ENCODE measurements at regions of chrX and their contacts with region 1.

Region 1: GRCh38 chrX:138745196-138745595 is 33.7 kb upstream of the FGF13 start:
- DNase-seq: peak in 1 of 2 donors; percentile 9
- ATAC-seq: peak in 1 of 8 donors; percentile 61
- H3K4me3 ChIP-seq: no peak overlapping the region
- H3K27ac ChIP-seq: no peak overlapping the region
- H3K4me1 ChIP-seq: no peaks in the 10 kb centered on the region
- H3K27me3 ChIP-seq: peaks cover 0 to 58% (median 0%) of the 10 kb centered on the region in 7 donors
- CTCF ChIP-seq: peak; percentile 19 to 87 (median 62)

Region 2: DNA sequence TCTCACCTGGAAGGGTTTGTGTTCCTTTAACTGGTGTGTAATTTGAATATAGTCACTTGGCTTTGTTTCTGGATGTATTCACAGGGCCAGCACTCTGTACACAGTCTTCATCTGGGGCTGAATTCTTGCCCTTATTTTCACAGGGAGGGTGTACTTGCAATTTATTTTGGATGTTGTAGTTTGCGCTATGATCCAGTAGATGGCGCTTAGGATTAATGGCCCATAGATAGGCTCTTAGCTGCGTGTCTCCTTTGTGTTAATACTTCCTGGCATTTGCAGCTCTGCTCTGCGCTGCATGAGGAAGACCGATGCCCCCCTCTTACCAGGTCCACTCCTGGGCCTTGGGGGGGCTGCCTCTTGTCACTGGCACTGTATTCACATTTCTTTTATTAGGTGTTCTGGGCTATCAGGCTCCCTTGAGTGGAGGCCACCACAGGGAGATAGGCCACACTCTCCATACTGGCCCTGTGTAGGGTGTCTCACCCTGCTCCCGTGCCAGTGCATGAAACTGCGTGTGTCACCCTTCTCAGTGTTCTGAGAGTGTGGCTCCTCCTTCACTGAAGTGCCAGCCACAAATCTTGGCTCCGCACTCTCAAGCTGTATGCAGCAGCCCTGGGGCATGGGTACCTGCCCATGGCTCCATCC is 617.0 kb before region 1 on chrX:
- intact Hi-C with region 1: loop called in 7 of 10 experiments (anchors 2 to 10 kb)
- DNase-seq: peak in 1 of 2 donors; percentile 3
- ATAC-seq: peak in 1 of 8 donors; percentile 50
- H3K4me3 ChIP-seq: no peak overlapping the region
- H3K27ac ChIP-seq: no peak overlapping the region
- H3K4me1 ChIP-seq: no peaks in the 10 kb centered on the region
- H3K27me3 ChIP-seq: peaks cover 0 to 38% (median 0%) of the 10 kb centered on the region in 7 donors
- CTCF ChIP-seq: peak; percentile 18 to 70 (median 48)

Region 3: GRCh38 chrX:138191998-138192397 is 553.2 kb before region 1 on chrX:
- intact Hi-C with region 1: loop called in 7 of 10 experiments (anchors 5 to 10 kb)
- DNase-seq: peak in 1 of 2 donors; percentile 4
- ATAC-seq: no peak
- H3K4me3 ChIP-seq: no peak overlapping the region
- H3K27ac ChIP-seq: no peak overlapping the region
- H3K4me1 ChIP-seq: no peaks in the 10 kb centered on the region
- H3K27me3 ChIP-seq: peaks cover 0 to 12% (median 0%) of the 10 kb centered on the region in 7 donors
- CTCF ChIP-seq: peak in 7 of 9 donors; percentile 26 to 48 (median 30)